H1 (cell line): ENCODE measurements at regions of chr6 and their contacts with region 1.

Region 1: DNA sequence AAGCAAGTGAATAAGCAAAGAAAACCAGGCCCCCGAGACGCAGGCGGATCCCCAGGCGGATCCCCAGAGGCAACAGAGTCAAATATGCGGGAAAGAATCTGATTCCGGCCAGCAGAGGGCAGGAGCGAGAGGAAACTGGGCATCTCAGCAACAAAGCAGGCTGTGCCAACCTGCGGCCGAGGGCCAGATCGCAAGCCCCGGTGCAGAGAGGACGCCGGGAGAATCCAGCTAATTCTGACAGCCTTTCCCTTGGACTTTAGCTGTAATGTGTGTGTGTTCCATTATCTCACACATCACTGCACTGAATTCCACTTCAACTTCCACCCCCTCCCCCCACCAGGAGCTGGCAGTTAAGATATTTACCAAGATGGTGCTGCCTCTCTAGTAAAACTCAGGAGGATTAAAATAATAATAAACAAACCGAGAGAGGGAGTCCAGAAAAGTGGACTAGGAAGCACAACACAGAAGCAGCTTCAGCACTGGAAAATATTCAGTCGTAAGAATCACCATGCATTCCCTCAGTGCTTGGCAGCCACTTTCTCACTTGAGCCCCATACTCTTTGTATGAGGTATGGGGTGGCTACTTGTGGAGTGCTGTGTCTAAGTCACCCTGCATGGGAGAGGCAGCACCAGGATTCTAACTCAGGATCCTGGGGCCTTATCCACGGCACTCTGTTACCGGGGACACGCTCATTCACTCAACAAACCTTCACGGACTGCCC is 66.2 kb upstream of the SNX9 start:
- DNase-seq: peak; percentile 82 to 93
- H3K4me3 ChIP-seq: no peak overlapping the region
- H3K27ac ChIP-seq: no peak overlapping the region
- H3K4me1 ChIP-seq: peaks cover 0 to 7% (median 5%) of the 10 kb centered on the region in 4 experiments; a peak in 4 of 7 replicates
- H3K27me3 ChIP-seq: no peaks in the 10 kb centered on the region
- CTCF ChIP-seq: peak; percentile 83 to 99 (median 91)
- EP300 ChIP-seq: no peak
- POLR2A ChIP-seq: no peak
- RAD21 ChIP-seq: peak; percentile 89

Region 2: DNA sequence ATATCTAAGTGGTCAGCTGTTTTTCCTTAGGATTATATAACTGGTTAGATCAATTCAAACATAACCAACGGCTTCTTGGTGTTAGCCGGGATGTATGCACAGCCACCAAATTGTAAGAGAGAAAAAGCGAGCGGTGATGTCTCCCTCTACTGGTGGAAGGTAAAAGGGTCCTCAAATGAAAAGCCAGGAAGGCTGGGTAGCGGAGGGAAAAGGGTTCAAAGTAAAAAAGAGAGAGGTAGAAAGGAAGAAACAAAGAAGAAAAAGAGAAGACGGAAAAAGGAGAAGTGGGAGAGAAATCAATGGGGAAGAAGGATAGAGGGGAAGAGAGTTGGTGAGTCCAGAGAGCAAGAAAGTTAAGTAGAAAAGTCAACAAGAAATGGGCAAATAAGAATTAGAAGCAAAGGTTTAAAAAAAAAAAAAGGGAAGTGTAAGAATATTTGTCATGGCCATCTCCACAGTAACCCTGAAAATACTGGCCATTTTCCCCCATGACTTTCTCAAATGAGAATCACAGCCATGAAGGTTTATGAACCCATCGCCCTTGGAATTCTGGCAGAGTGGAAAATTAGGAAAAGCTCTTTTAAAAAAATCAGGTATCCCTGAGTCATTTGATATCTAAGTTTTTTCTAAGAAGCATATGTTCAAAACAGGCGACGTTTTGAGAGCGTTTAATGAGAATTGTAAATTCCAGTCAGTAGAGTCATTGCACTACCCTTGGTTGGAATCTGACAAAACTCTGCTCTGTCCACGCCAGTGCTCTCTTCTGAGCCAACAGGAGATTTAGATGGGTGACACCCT is 89.5 kb before region 1 on chr6:
- CTCF ChIA-PET with region 1: interaction called, 32 read pairs
- POLR2A ChIA-PET with region 1: no interaction called
- DNase-seq: peak in 1 of 2 experiments; percentile 69
- H3K4me3 ChIP-seq: no peak overlapping the region
- H3K27ac ChIP-seq: no peak overlapping the region
- H3K4me1 ChIP-seq: peaks cover 3 to 14% (median 6%) of the 10 kb centered on the region in 4 experiments; a peak in 6 of 7 replicates
- H3K27me3 ChIP-seq: no peaks in the 10 kb centered on the region; a peak in 1 of 7 replicates
- CTCF ChIP-seq: peak; percentile 39 to 70 (median 68)
- EP300 ChIP-seq: no peak
- POLR2A ChIP-seq: no peak
- RAD21 ChIP-seq: peak; percentile 86

Region 3: DNA sequence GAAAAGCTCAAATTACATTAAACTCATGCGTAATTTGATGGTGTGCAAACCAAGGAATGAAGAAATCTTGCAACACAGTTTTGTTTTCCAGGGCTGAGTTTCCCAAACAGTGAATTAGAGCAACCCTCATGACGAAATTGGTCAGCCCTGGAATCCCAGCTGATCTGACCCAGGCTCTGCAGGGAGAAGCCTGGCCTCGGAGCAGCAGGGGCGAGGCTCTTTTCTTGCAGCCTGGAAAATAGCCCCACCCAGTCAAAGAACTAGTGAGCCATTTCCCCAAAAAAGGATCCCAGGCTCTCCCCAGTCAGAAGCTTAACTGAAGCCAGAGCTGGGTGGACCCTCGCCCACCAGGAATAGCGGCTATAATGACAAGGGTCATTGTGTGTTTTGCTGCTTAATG is 41.1 kb before region 1 on chr6:
- CTCF ChIA-PET with region 1: interaction called, 20 read pairs
- POLR2A ChIA-PET with region 1: no interaction called
- DNase-seq: no peak
- H3K4me3 ChIP-seq: no peak overlapping the region
- H3K27ac ChIP-seq: no peak overlapping the region
- H3K4me1 ChIP-seq: peaks cover 0 to 10% (median 5%) of the 10 kb centered on the region in 4 experiments; a peak in 4 of 7 replicates
- H3K27me3 ChIP-seq: peaks cover 0 to 2% (median 0%) of the 10 kb centered on the region in 4 experiments; a peak in 1 of 7 replicates
- CTCF ChIP-seq: no peak
- EP300 ChIP-seq: no peak
- POLR2A ChIP-seq: no peak
- RAD21 ChIP-seq: no peak

Region 4: GRCh38 chr6:157770946-157771345 is 14.1 kb after region 1 on chr6:
- CTCF ChIA-PET with region 1: interaction called, 13 read pairs
- POLR2A ChIA-PET with region 1: no interaction called
- DNase-seq: no peak
- H3K4me3 ChIP-seq: no peak overlapping the region
- H3K27ac ChIP-seq: no peak overlapping the region
- H3K4me1 ChIP-seq: peaks cover 3 to 6% (median 3%) of the 10 kb centered on the region in 4 experiments; a peak in 3 of 7 replicates
- H3K27me3 ChIP-seq: no peaks in the 10 kb centered on the region
- CTCF ChIP-seq: no peak
- EP300 ChIP-seq: no peak
- POLR2A ChIP-seq: no peak
- RAD21 ChIP-seq: no peak

Region 5: DNA sequence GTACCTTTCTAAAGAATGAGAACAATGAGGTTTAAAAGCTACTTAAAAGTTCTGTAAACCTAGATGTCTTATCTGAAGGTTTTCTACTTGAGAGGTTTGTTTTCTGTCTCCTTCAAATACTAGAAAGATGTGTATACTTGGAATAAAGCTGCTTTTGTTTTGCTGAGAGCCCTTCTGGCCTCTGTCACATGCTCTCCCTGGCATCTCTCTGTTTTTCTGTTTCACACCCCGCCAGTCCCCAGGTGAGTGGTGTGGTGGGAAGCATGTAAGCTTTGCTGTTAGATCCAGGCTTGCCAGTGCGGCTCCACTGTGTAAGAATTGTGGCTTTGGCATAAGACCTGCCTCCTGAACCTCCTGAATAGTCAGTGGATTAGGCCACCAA is 123.0 kb after region 1 on chr6:
- CTCF ChIA-PET with region 1: interaction called, 54 read pairs
- POLR2A ChIA-PET with region 1: no interaction called
- DNase-seq: no peak
- H3K4me3 ChIP-seq: no peak overlapping the region
- H3K27ac ChIP-seq: no peak overlapping the region
- H3K4me1 ChIP-seq: peaks cover 0 to 10% (median 7%) of the 10 kb centered on the region in 4 experiments; a peak in 4 of 7 replicates
- H3K27me3 ChIP-seq: no peaks in the 10 kb centered on the region
- CTCF ChIP-seq: no peak
- EP300 ChIP-seq: no peak
- POLR2A ChIP-seq: no peak
- RAD21 ChIP-seq: no peak